SK-N-SH (cell line): ENCODE measurements at regions of chr2 and their contacts with region 1.

Region 1: DNA sequence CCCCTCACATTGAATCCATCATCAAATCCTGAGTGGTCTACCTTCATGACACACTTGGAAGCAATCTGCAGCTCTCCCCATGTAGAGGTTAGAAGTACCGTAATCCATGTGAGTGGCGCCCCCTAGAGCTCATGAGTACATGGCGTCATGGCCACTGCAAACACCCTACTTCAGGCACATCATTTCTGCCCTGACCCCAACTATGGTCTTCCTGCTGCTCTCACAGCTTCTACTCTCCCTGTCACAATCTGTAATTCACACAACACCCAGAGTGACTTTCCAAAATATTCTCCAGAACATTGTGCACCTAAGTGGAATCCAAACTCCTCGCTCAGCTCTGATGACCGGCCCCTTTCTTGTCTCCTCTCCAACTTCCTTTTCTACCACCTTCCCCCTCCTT is 141.9 kb downstream of the ANKRD44 start:
- DNase-seq: peak; percentile 70
- H3K4me3 ChIP-seq: no peak overlapping the region
- H3K27ac ChIP-seq: peak overlapping the region in 1 of 2 experiments; percentile 3; a peak in 1 of 4 replicates
- H3K4me1 ChIP-seq: peaks cover 5 to 13% of the 10 kb centered on the region in 2 experiments; a peak in 3 of 4 replicates
- H3K27me3 ChIP-seq: no peaks in the 10 kb centered on the region
- CTCF ChIP-seq: peak; percentile 67
- EP300 ChIP-seq: no peak
- RAD21 ChIP-seq: peak; percentile 74

Region 2: GRCh38 chr2:196742685-196743084 is 426.0 kb before region 1 on chr2:
- CTCF ChIA-PET with region 1: no interaction called
- POLR2A ChIA-PET with region 1: no interaction called
- DNase-seq: no peak
- H3K4me3 ChIP-seq: no peak overlapping the region
- H3K27ac ChIP-seq: no peak overlapping the region
- H3K4me1 ChIP-seq: no peaks in the 10 kb centered on the region
- H3K27me3 ChIP-seq: no peaks in the 10 kb centered on the region
- CTCF ChIP-seq: no peak
- EP300 ChIP-seq: no peak
- RAD21 ChIP-seq: no peak

Region 3: DNA sequence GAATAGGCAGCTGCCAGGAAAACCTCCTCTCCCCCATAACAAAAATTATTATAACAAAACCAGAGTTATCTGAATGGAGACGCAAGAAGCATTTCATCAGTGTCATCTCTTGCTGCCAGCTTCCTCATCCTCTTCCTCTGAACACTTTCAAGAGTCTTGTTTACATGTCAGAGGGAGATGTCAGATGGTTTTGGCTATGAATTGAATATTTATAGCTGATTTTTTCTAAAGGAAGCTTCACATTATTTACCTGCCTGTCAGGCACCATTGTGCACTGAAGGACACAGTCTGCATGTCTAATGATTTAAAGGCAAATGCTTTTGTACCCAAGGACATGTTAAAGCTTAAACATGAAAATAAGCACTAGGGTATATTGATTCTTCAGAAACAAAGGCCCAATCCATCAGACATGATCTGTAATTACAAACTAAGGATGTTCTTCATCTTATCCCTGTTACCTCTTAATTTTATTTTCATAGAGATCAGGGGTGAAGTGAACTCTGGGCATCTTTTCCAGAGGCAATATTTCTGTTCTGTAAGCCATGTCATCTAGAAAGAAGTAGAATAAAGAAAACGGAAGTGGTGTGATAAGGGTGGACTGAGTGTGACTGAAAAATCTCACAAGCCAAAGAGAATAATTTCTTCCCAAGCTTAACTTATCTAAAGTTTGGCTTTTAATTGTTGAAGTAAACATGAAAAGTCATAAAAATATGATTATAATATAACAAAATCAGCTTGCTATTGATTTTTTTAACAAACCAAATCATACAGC is 26.8 kb before region 1 on chr2:
- CTCF ChIA-PET with region 1: interaction called, 10 read pairs
- POLR2A ChIA-PET with region 1: no interaction called
- DNase-seq: no peak
- H3K4me3 ChIP-seq: no peak overlapping the region
- H3K27ac ChIP-seq: peak overlapping the region in 1 of 2 experiments; percentile 60; a peak in 1 of 4 replicates
- H3K4me1 ChIP-seq: peaks cover 10 to 21% of the 10 kb centered on the region in 2 experiments; a peak in 3 of 4 replicates
- H3K27me3 ChIP-seq: no peaks in the 10 kb centered on the region
- CTCF ChIP-seq: no peak
- EP300 ChIP-seq: no peak
- RAD21 ChIP-seq: no peak

Region 4: DNA sequence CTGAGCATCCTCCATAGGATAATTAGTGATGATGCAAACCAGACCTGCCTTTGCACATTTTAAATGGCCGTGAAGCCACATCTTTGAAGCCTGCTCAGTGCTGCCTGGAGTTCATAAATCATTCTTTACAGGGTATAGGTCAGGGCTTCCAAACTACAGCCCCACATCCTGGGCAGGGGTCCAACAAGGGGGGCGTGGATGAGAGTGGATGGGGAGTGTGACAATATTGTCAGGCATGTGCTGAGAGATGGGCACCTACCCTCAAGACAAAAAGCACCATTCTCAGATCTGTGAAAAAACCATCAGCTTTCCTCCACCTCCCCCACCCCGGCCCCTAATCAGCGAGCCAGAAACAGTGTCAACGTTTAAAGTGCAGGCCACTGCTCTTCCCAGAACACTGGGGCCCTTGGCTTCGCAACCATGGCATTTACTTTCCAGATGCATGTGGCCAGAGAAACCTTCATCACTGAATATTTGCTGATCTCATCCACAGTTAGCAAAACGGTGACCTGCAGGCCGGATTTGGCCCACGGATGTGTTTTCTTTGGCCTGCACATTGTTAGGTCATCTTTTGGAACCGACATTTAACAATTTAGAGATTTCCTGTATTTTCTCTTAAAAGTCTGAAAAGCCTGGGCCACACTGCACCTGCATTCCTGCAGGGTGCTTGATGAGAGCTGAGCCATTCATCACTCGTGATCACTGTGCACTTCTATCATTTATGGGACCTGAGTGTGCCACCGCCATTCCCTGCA is 11.2 kb after region 1 on chr2:
- CTCF ChIA-PET with region 1: interaction called, 25 read pairs
- POLR2A ChIA-PET with region 1: no interaction called
- DNase-seq: peak; percentile 70
- H3K4me3 ChIP-seq: no peak overlapping the region; a peak in 1 of 4 replicates
- H3K27ac ChIP-seq: peak overlapping the region; percentile 49 to 99
- H3K4me1 ChIP-seq: peaks cover 6 to 41% of the 10 kb centered on the region in 2 experiments; a peak in 3 of 4 replicates
- H3K27me3 ChIP-seq: no peaks in the 10 kb centered on the region
- CTCF ChIP-seq: no peak
- EP300 ChIP-seq: peak; percentile 76 to 91
- RAD21 ChIP-seq: no peak; the same call in 1 of the 2 replicates

Region 5: DNA sequence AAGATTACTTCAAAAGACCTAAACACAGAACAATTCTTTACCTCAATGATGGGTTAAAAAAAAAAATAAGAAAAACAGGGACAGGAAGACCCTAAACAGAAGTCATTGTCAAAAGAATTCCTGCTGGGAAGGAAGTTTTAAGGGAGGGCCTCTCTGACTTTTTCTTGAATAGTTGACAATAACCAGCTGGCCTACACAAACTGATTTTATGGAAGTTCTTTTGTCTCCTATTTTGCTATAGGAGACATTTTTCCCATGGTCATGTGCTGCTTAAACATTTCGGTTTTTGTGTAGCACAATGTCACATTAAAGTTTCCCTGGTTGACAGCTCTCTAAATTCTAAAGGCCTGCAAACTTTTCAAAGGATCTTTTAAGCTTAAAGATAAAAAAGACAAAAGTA is 451.4 kb after region 1 on chr2:
- CTCF ChIA-PET with region 1: no interaction called
- POLR2A ChIA-PET with region 1: no interaction called
- DNase-seq: no peak
- H3K4me3 ChIP-seq: no peak overlapping the region
- H3K27ac ChIP-seq: no peak overlapping the region
- H3K4me1 ChIP-seq: no peaks in the 10 kb centered on the region
- H3K27me3 ChIP-seq: no peaks in the 10 kb centered on the region
- CTCF ChIP-seq: no peak
- EP300 ChIP-seq: no peak
- RAD21 ChIP-seq: no peak